GM10248 (cell line): ENCODE measurements at regions of chr7 and their contacts with region 1.

Region 1: DNA sequence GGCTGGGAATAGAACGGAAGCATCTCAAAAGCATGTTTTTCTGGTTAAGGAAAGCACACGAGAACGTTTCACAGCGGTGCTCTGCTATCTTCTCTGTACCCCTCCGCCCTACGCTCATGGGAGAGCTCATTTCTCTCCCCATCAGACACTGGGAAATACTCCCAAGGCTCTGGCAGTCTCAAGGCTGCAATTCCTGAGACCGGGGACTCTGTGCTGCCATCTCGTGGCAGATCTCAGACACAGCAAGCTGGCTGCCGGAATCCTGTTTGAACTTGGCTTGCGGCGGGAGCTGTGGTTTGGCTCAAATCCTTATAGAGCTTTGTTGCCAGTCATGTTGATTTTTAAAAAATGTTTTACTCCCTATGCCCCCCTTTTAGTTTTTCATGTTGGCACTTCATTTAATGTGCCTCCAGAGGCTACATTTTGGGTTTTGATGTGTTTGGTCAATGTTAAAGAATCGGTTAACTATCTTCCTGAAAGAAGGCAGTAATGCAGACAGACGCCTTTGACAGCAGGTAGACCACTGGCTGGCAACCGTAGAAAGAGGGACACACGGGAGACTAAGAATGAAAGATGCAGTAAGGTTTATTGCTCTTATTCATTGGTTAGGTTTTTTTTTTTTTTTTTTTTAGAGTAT is 27.6 kb downstream of the BMPER start:
- DNase-seq: peak; percentile 56
- CTCF ChIP-seq: peak; percentile 94

Region 2: GRCh38 chr7:33243319-33243881 is 689.5 kb before region 1 on chr7:
- CTCF ChIA-PET with region 1: interaction called, 20 read pairs
- POLR2A ChIA-PET with region 1: no interaction called
- DNase-seq: peak; percentile 7
- CTCF ChIP-seq: peak; percentile 40

Region 3: GRCh38 chr7:33888166-33888565 is 44.8 kb before region 1 on chr7:
- CTCF ChIA-PET with region 1: interaction called, 11 read pairs
- POLR2A ChIA-PET with region 1: no interaction called
- DNase-seq: no peak
- CTCF ChIP-seq: no peak

Region 4: DNA sequence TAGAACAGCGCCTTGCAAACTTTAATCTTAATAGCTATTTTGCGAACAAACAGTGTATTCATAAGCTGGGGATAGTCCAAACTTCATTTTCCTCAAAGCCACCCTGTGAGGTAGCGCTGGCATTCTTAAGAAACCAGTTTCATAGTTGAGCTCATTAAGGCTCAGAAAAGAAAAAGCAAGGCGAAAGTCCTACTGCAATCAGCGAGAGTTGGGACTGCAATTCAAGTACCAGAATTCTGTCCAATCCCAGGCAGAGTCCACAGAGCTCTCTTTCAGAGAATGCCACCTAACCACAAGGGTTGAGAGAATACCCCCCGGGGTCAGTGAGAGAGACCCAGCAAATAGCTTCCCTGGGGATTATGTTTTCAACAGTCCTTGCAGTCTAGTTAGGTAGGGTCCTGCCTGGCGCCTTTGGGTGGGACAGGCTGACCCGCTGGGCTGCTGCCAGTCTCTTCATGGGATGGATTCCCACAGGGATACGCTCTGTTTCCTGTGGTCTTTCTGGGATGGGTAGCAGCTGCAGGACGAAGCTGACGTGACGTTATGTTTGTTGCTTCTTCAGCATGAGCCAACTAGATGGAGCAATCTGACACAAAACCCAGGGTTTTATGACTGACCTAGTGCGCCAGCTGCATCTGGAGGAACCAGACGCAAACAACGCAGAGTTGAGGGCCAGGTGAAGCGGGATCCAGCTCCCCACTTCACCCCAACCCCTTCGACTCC is 11.6 kb before region 1 on chr7:
- CTCF ChIA-PET with region 1: interaction called, 42 read pairs
- POLR2A ChIA-PET with region 1: no interaction called
- DNase-seq: no peak
- CTCF ChIP-seq: no peak

Region 5: DNA sequence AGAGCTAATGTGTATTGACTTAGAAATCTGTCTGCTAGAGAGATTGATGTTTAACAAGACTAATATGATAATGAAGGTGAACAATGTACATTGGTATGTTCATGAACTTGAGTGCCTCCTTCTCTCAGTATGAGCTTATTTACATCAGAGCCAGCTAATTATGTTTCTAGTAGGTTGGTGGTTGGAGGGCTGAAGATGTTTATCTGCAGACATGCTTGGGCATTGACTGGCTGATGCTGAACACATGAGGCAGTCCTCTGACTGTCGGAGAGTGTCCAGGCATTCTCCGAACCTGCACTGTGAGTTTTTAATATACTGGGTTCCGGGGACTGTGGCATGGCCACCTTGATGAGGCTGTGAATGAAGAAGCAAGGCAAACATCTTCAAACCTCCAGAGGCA is 19.9 kb after region 1 on chr7:
- CTCF ChIA-PET with region 1: interaction called, 25 read pairs
- POLR2A ChIA-PET with region 1: no interaction called
- DNase-seq: no peak
- CTCF ChIP-seq: no peak